ENCODE measurements at regions of chr2 and their contacts with region 1.

Region 1: DNA sequence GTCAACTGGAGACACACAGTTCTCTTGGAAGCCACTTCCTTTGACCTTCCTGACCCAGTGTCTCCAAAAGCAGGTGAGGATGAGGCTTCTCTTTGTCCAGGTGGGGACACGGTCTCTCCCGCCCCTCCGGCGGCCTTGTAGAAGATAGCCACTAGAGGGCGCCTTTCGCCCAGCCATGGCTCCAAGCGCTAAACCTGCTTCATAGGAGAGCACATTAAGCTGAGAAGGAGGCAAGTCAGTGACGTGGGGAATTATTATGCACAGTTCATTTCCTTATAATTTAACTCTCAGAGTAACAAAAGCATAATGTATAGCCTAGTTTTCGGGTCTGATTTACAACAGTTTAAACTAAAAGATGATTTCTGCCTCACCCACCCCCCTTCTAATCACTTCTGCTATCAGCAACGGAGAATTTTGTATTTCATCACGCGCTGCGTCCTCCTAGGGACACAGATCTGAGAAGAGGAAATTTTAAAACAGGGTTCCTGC is 208.7 kb downstream of the ICOS start:
- DNase-seq: peak; percentile 32
- H3K4me3 ChIP-seq: no peak overlapping the region
- H3K27ac ChIP-seq: no peak overlapping the region
- H3K27me3 ChIP-seq: peaks cover 2% of the 10 kb centered on the region
- CTCF ChIP-seq: peak; percentile 94

Region 2: GRCh38 chr2:204127238-204127637 is 18.1 kb before region 1 on chr2:
- CTCF ChIA-PET with region 1: no interaction called
- POLR2A ChIA-PET with region 1: no interaction called
- DNase-seq: no peak
- H3K4me3 ChIP-seq: no peak overlapping the region
- H3K27ac ChIP-seq: no peak overlapping the region
- H3K27me3 ChIP-seq: no peaks in the 10 kb centered on the region
- CTCF ChIP-seq: no peak

Region 3: DNA sequence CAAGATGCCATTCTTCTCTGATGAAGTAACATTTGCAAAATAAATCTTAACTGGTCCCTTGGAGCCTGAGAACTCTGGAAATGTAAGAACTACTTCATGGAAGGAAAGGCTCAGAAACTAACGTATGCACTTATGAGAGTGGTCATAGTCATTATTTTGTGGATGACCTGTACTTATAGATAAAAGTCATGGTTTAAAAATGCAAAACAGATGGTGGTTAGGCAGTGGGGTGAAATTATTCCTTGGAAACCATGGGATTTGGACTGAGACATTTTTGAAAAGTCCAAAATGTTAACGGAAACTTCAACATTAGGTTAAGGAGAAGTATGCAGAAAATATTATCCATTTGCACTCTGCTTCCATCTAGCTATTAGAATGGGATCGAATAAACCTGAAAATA is 14.2 kb after region 1 on chr2:
- CTCF ChIA-PET with region 1: interaction called, 13 read pairs
- POLR2A ChIA-PET with region 1: no interaction called
- DNase-seq: no peak
- H3K4me3 ChIP-seq: no peak overlapping the region
- H3K27ac ChIP-seq: no peak overlapping the region
- H3K27me3 ChIP-seq: no peaks in the 10 kb centered on the region
- CTCF ChIP-seq: no peak

Region 4: GRCh38 chr2:204166961-204167360 is 21.7 kb after region 1 on chr2:
- CTCF ChIA-PET with region 1: interaction called, 19 read pairs
- POLR2A ChIA-PET with region 1: no interaction called
- DNase-seq: no peak
- H3K4me3 ChIP-seq: no peak overlapping the region
- H3K27ac ChIP-seq: no peak overlapping the region
- H3K27me3 ChIP-seq: no peaks in the 10 kb centered on the region
- CTCF ChIP-seq: no peak

Region 5: DNA sequence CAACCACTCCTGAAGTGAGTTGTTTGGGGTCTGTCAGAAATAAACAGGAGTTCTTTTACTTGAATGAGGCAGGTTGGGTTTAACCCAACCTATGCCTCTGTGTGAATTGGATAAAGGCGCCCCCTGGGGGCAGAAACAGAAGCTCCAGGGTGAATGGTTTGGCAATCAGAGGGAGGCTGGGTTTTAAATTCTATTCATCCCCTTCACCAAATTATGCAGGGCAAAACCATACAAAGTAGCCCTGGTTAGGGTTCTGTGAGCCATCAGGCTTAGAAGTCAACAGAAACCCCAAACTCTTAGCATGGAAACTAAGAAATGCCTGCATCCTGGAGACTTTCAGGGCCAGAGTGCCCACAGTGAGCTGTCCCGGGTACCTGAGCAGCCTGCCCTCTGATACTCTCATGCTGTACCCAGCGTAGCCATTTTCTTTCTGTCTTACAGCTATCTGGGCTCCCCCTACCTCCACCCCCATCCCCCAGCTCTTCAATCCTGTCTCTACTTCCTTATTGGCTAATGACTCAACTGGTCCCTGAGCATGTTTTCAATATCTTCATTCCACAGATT is 32.8 kb after region 1 on chr2:
- CTCF ChIA-PET with region 1: interaction called, 19 read pairs
- POLR2A ChIA-PET with region 1: no interaction called
- DNase-seq: no peak
- H3K4me3 ChIP-seq: no peak overlapping the region
- H3K27ac ChIP-seq: no peak overlapping the region
- H3K27me3 ChIP-seq: no peaks in the 10 kb centered on the region
- CTCF ChIP-seq: peak; percentile 40

Region 6: DNA sequence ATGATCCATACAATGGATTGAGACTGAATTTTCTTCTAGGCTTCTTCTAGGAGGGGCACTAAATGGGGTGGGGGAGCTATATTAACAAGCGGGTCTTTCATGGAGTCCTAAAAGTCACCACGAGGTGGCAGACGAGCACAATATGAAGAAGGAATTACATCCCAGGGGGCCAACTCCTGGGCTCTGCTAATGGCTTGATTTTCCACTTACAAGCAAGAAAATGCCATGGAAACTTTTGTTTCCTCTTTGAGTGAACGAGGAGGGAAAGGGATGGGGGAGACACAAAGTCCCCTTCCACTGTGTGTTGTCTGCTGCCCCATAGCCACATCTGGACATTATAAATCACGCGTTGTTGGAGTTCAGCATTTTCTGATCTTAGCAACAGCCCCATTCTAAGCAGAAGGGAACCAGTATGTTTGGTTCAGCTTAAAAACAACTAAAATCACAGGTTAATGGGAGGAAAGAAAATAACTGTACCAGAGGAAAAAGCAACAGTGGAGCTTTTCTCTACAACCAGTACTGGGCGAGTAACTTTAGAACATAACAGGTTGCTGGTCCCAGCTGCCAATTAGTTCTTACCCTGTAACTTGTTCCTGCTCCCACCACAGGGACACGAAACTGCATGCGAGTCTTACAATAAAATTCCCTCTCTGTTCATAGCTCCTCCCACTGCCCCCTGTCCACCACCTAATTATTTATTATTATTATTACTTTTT is 115.0 kb after region 1 on chr2:
- CTCF ChIA-PET with region 1: interaction called, 14 read pairs
- POLR2A ChIA-PET with region 1: no interaction called
- DNase-seq: peak; percentile 49
- H3K4me3 ChIP-seq: no peak overlapping the region
- H3K27ac ChIP-seq: no peak overlapping the region
- H3K27me3 ChIP-seq: peaks cover 2% of the 10 kb centered on the region
- CTCF ChIP-seq: peak; percentile 86

Region 7: GRCh38 chr2:205947621-205948495 is 1802.6 kb after region 1 on chr2:
- CTCF ChIA-PET with region 1: interaction called, 15 read pairs
- POLR2A ChIA-PET with region 1: no interaction called
- DNase-seq: peak; percentile 65
- H3K4me3 ChIP-seq: 0 out of 2 replicates have a peak overlapping the region, but pooled peaks have one; percentile 13
- H3K27ac ChIP-seq: peak overlapping the region; percentile 21
- H3K27me3 ChIP-seq: peaks cover 9% of the 10 kb centered on the region
- CTCF ChIP-seq: peak; percentile 96